ENCODE measurements at regions of chrX and their contacts with region 1.

Region 1: DNA sequence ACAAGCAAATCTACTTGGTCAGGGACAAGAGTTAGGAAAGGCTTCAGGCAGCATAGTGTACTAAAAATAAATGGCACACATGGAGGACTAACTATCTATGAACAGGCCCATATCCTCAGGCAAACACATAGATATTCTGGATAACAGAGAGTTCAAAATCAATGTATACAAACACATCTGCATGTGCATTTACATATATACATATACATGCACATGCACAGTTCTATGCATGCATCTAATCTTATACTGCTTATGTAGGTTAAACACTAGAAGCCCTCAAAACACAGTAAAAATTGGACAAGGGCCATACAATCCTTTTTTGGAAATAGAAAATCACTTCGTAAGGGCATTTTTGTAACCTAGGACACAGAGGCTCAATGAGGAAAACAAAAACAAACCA is 458.0 kb upstream of the CXorf51B start:
- DNase-seq: no peak
- H3K4me3 ChIP-seq: no peak overlapping the region
- H3K27ac ChIP-seq: no peak overlapping the region
- H3K4me1 ChIP-seq: no peaks in the 10 kb centered on the region
- H3K27me3 ChIP-seq: no peaks in the 10 kb centered on the region
- CTCF ChIP-seq: no peak
- POLR2A ChIP-seq: no peak

Region 2: GRCh38 chrX:146259207-146259606 is 92.4 kb before region 1 on chrX:
- intact Hi-C with region 1: loop called (anchors 10 kb)
- DNase-seq: no peak
- H3K4me3 ChIP-seq: no peak overlapping the region
- H3K27ac ChIP-seq: no peak overlapping the region
- H3K4me1 ChIP-seq: no peaks in the 10 kb centered on the region
- H3K27me3 ChIP-seq: no peaks in the 10 kb centered on the region
- CTCF ChIP-seq: no peak
- POLR2A ChIP-seq: no peak

Region 3: DNA sequence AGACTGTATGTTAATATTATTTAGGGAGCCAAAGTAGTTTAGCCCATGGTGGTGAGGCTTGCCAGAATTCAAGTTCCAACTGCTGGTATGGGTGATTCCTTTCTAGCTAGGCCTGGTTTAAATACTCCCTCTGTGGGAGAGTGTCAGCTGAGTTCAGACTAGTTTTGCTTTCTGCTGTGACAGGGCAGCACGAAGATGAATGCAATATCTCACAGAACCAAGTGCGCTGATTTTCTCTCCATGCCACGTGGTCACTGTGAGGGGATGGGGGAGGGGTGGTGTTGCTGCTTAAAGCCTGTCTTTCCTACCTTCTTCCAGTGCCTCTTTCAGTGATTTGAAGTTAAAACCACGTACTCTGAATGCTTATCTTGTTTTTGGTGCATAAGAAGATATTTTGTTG is 12.3 kb after region 1 on chrX:
- intact Hi-C with region 1: no loop called
- DNase-seq: no peak
- H3K4me3 ChIP-seq: no peak overlapping the region
- H3K27ac ChIP-seq: no peak overlapping the region
- H3K4me1 ChIP-seq: no peaks in the 10 kb centered on the region
- H3K27me3 ChIP-seq: peaks cover 0 to 5% of the 10 kb centered on the region in 2 donors
- CTCF ChIP-seq: no peak
- POLR2A ChIP-seq: no peak

Region 4: DNA sequence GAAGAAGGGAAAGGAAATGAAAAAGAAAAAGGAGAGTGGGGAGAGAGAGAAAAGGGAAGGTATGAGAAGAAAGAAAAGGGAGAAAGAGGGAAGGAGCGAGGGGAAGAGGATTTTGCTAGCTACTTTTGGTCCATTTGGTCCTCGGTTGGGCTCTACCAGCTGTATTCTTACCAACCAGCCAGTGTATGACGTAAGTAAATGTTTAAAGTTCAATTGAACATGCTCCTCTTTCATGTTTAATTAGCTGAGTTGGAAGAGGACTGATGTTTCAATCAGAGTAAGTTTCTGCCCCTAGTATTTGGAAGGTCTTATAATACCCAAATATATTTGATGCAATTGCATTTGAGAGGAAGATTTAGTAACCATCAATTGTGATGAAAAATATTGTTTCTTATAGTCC is 33.9 kb after region 1 on chrX:
- intact Hi-C with region 1: no loop called
- DNase-seq: no peak
- H3K4me3 ChIP-seq: no peak overlapping the region
- H3K27ac ChIP-seq: no peak overlapping the region
- H3K4me1 ChIP-seq: no peaks in the 10 kb centered on the region
- H3K27me3 ChIP-seq: no peaks in the 10 kb centered on the region
- CTCF ChIP-seq: no peak
- POLR2A ChIP-seq: no peak

Region 5: DNA sequence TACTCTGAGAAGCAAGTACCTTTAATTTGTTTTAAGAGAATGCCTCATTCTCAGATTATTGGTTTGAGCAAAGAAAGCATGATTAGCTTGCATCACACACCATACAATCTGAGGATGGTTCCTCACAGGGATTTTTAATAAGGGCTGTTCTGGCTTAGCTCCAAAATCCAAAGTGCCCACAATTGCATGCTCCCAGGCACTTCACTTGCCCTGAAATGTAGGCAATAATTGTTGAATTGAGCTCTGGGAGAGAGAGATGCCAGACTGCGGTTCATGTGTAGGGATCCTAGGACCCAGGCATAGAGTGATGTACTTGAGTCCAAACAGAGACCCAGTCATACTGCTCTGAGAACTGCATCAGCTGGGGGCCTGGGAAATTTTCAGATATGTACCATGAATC is 99.5 kb after region 1 on chrX:
- intact Hi-C with region 1: no loop called
- DNase-seq: no peak
- H3K4me3 ChIP-seq: no peak overlapping the region
- H3K27ac ChIP-seq: no peak overlapping the region
- H3K4me1 ChIP-seq: no peaks in the 10 kb centered on the region
- H3K27me3 ChIP-seq: peaks cover 0 to 9% of the 10 kb centered on the region in 2 donors
- CTCF ChIP-seq: no peak
- POLR2A ChIP-seq: no peak

Region 6: DNA sequence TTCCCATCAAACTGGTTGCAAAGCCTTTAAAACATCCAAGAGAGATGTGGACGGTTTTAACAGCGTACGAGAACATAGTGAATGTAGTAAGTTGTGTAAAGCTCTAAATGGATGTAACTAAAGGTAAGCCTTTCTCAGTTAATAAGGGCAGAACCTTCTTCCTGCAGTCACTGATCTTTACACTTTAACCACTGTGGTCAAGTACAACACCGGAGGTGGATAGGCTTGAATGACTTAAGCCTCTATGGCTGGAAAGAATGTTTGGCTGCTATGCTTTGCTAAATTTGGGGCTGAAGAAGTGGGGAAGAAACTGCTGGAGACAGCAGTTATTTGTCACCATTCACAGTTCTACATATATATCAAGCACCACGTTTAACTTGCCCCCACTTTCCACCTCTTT is 1275.0 kb after region 1 on chrX:
- intact Hi-C with region 1: no loop called
- DNase-seq: no peak
- H3K4me3 ChIP-seq: no peak overlapping the region
- H3K27ac ChIP-seq: no peak overlapping the region
- H3K4me1 ChIP-seq: no peaks in the 10 kb centered on the region
- H3K27me3 ChIP-seq: no peaks in the 10 kb centered on the region
- CTCF ChIP-seq: no peak
- POLR2A ChIP-seq: no peak

Measured in breast epithelium (tissue), 4 donors.